Left ventricle myocardium superior (tissue), 1 donor: ENCODE measurements at regions of chr16 and their contacts with region 1.

Region 1: DNA sequence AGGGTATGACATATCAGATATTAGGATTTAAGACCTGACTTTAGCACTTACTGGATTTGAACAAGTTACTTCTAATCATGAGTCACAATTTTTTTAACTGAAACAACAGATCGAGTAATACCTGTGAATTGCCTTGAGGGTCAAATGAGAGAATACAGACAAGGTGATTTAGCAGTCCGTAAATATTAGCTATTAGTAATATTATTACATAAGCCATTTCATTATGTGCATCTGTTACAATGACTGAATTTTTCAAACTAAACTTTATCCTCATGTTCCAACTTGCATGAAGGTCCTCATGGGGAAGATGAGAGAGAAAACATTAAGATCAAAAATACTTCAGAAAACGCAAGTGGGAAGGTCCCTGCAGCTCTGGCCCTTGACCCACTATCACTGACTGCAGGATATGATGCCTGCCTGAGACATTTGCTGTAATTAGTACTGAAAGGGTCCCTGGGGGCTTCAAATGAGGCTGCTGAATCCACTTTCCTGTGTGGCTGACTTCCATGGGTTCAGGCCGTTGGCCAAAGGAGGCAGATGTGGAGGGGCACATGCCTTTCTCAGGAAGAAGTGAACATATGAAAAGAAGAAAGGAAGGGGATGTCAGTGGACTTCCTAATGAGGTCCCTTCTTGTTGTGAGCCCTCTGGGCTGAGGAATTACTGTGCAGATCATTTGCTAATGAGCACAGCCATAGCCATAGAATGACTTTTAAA is 441.7 kb downstream of the CDH11 start:
- DNase-seq: no peak
- ATAC-seq: no peak

Region 2: DNA sequence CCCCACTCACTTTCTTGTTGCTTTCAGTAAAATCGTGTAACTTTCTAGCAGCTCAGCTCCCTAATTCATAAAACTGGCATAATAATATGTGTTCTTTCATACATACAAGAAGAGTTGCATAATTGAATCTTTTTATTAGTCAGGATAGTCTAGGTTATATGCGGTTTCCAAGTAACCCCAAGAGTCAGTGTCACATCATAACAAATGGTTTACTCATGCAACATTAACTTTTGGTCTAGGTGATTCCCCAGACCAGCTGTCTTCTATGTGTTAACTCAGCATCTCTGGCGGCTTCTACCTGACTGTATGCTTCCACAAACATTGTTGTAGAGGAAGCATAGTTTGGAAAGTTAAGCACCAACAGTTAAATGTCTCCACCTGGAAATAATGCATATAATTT is 558.7 kb before region 1 on chr16:
- intact Hi-C with region 1: no loop called
- DNase-seq: no peak
- ATAC-seq: no peak

Region 3: GRCh38 chr16:64738321-64738960 is 58.3 kb after region 1 on chr16:
- intact Hi-C with region 1: loop called (anchors 10 kb)
- DNase-seq: no peak
- ATAC-seq: no peak